Left cardiac atrium (tissue), 4 donors: ENCODE measurements at regions of chr6 and their contacts with region 1.

Region 1: DNA sequence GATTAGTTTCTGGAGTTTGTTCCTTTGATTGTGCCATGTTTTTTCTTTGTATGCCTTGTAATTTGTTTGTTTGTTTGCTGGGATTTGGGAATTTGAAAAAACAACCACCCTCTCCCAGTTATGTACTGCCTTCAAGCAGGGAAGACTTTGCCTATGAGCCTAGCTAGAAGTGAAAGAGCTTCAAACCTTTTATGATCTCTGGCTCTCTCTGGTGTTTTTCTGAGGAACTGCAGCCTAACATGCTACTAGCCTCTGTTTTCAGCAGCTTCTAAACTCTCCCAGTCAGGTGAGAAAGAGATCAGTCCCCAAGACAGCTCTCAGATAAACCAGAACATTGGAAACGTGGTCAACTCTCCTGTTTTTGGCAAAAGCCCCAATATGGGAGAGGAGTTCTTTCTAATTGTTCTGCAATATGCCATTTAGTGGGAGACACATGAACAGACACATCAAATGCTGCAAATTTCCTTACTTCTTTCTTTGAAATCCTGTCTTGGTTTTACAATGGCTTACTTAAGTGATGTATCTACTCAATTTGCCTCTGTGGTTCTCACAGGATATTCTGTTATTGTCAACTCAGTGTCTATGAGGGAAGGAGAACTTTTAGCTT is 58.9 kb upstream of the SERINC1 start:
- DNase-seq: no peak
- ATAC-seq: peak; percentile 82 to 84

Region 2: DNA sequence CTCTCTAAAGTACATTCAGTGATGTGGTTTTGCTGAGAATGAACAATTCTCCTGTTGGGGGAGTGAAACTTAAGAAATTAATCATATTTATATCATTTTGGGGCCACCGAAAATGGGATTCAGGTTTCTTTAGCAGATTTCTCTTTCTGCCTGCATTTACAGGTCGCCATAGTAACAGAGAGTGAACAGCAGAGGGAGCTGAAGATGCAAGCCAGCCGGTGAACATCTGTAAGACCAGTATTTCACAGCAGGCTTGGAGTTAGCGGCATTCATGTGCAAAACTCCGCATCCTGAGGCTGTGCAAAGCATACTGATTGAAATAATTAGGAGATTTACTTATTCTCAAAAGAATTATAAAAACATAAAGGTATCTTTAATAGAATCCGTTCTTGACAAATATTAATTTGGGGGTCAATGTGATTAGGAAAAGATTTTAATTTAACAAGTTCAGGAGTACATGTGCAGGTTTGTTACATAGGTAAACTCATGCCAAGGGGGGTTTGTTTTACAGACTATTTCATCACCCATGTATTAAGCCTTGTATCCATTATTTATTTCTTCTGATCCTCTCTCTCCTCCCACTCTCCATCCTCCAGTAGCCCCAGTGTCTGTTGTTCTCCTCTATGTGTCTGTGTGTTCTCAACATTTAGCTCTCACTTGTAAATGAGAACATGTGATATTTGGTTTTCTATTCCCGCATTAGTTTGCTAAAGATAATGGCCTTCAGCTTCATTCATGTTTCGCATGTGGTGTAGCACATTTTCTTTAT is 148.9 kb before region 1 on chr6:
- intact Hi-C with region 1: loop called (anchors 1 to 5 kb)
- DNase-seq: peak; percentile 45
- ATAC-seq: peak; percentile 83 to 84

Region 3: GRCh38 chr6:122476131-122476530 is 54.4 kb before region 1 on chr6:
- intact Hi-C with region 1: loop called in 1 of 2 experiments (anchors 5 kb)
- DNase-seq: no peak
- ATAC-seq: no peak

Region 4: GRCh38 chr6:122491919-122492555 is 38.5 kb before region 1 on chr6:
- intact Hi-C with region 1: loop called in 1 of 2 experiments (anchors 2 kb)
- DNase-seq: peak; percentile 60
- ATAC-seq: peak; percentile 91 to 92

Region 5: DNA sequence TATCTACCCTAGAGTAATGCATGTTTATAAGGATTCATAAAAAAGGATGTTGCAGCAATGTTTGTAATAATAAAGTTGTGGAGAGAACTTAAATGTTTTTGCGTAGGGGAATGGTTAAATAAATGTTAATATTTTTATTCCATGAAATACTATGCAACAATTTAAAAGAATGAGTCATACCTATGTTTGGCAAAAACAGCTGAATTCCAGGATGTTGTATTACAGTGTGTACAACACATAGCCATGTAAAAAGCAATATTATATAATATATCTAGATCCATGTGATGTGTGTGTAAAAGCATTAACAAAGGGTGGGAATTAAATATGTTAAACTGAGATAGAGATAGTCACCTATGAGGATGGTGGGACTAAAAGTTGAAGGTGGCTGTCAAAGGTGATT is 58.6 kb after region 1 on chr6:
- intact Hi-C with region 1: no loop called
- DNase-seq: no peak
- ATAC-seq: no peak